PC-3 (cell line): ENCODE measurements at regions of chr20 and their contacts with region 1.

Region 1: GRCh38 chr20:13325033-13325432 is 104.0 kb downstream of the ISM1 start:
- DNase-seq: peak; percentile 63
- ATAC-seq: peak; percentile 94
- H3K4me3 ChIP-seq: no peak overlapping the region
- H3K27ac ChIP-seq: no peak overlapping the region
- H3K4me1 ChIP-seq: no peaks in the 10 kb centered on the region
- H3K27me3 ChIP-seq: no peaks in the 10 kb centered on the region
- CTCF ChIP-seq: peak; percentile 84

Region 2: DNA sequence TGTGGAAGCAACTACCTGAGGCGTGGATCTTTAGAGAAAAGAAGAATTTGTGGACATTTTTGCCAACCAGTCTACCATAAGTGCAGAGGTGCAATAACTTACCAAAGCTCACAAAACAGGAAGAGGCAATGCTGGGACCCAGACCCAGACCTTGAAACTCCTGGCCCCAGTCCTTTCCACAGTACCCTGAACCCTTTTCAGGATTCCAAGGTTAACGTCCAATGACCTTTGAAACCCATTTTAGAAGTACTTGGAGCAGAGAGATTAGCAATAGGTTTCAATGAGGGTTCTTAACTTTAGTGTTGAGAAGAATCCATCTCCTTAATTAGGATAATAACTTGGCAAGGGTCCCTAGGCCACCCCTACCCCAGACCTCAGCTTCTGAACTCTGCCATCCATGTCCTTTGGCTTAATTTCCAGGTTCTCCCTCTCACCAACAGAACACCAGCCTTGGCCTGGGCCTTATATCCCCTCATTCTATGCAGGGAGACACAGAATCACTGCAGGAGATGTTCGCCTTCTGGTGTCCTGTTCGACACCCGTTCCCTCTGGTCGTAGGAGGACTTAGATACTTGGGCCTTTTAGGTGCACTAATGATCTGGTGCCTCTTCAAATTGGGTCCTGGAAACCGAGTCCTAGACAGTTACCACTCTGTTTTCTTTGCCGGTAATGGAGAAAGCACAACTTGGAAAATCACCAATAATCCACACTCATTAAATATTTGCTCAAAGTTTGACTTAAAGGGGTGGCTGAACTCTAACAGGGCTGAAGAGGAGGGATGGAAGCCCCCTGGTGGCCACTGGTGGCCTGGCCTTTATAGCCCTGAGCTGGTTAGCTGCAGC is 63.4 kb before region 1 on chr20:
- CTCF ChIA-PET with region 1: no interaction called
- POLR2A ChIA-PET with region 1: no interaction called
- intact Hi-C with region 1: no loop called
- DNase-seq: peak; percentile 76
- ATAC-seq: peak; percentile 87
- H3K4me3 ChIP-seq: no peak overlapping the region
- H3K27ac ChIP-seq: no peak overlapping the region
- H3K4me1 ChIP-seq: peaks cover 15% of the 10 kb centered on the region
- H3K27me3 ChIP-seq: peaks cover 10% of the 10 kb centered on the region
- CTCF ChIP-seq: peak; percentile 95

Region 3: GRCh38 chr20:13302647-13303450 is 22.2 kb before region 1 on chr20:
- CTCF ChIA-PET with region 1: no interaction called
- POLR2A ChIA-PET with region 1: no interaction called
- intact Hi-C with region 1: no loop called
- DNase-seq: peak; percentile 73
- ATAC-seq: peak; percentile 97
- H3K4me3 ChIP-seq: no peak overlapping the region
- H3K27ac ChIP-seq: no peak overlapping the region
- H3K4me1 ChIP-seq: no peaks in the 10 kb centered on the region
- H3K27me3 ChIP-seq: peaks cover 25% of the 10 kb centered on the region
- CTCF ChIP-seq: peak; percentile 94

Region 4: DNA sequence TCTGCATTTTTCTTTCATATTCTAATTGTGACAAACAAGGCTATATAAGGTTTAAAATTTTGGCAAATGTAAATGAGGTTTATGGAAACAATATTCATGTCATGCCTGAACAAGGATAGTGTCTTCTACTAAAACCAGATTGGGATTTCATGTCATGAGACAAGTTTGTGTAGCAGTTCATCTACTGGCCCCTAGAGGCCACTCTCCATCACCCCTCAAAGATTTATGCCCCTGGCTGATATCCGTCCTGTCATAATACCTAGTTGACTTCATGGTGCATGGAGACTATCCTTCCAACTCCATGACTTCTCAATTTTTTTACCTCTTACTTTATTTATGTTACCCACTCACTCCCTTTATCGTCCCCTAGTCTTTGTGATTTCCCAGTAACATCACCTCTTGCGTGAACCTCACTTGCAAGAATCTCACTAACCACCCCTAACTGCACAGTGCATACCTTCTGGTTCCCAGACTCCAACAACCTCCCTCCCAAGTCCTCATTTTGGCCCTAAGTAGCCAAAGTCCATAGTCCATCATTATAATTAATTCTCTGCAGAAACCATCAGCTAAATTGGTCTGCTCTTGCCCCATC is 133.9 kb after region 1 on chr20:
- CTCF ChIA-PET with region 1: no interaction called
- POLR2A ChIA-PET with region 1: no interaction called
- intact Hi-C with region 1: loop called (anchors 5 kb)
- DNase-seq: peak; percentile 49
- ATAC-seq: peak; percentile 55
- H3K4me3 ChIP-seq: no peak overlapping the region
- H3K27ac ChIP-seq: no peak overlapping the region
- H3K4me1 ChIP-seq: no peaks in the 10 kb centered on the region
- H3K27me3 ChIP-seq: no peaks in the 10 kb centered on the region
- CTCF ChIP-seq: peak; percentile 89

Region 5: DNA sequence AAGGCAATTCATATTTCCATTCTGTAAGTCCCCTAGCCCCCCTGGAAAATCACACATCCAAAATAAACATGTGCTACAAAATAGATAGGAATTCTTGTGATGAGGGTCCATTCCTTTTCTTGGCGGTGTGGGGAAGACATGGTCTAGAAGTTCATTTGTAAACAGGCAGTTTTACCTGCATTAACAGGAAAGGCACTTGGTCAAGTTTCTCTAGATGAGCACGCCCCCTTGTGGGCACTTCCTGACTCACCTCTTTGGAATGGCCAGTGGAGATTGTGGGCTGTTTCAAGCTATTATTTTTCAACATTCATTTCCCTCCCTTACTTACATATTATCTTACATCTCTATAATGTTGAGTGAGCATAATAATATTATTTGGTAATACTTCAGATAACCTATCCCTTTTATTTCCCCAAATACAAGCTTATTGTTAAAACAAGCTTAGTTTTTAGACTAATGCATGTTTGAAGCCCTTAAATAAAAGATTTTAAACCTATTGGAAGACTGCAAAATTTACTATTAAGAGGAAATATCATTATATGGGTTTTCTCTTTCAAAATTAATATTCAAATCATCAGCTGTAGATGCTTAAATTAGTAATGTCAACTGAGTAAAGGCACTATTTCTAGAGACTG is 221.6 kb after region 1 on chr20:
- CTCF ChIA-PET with region 1: interaction called, 31 read pairs
- POLR2A ChIA-PET with region 1: interaction called, 3 read pairs
- intact Hi-C with region 1: loop called (anchors 2 kb)
- DNase-seq: peak; percentile 93
- ATAC-seq: peak; percentile 88
- H3K4me3 ChIP-seq: no peak overlapping the region
- H3K27ac ChIP-seq: no peak overlapping the region
- H3K4me1 ChIP-seq: peaks cover 7% of the 10 kb centered on the region
- H3K27me3 ChIP-seq: no peaks in the 10 kb centered on the region
- CTCF ChIP-seq: peak; percentile 92